Left cardiac atrium (tissue), 4 donors: ENCODE measurements at regions of chr7 and their contacts with region 1.

Region 1: GRCh38 chr7:95690367-95690947 is 81.9 kb upstream of the DYNC1I1 start:
- DNase-seq: no peak
- ATAC-seq: peak; percentile 59 to 62

Region 2: DNA sequence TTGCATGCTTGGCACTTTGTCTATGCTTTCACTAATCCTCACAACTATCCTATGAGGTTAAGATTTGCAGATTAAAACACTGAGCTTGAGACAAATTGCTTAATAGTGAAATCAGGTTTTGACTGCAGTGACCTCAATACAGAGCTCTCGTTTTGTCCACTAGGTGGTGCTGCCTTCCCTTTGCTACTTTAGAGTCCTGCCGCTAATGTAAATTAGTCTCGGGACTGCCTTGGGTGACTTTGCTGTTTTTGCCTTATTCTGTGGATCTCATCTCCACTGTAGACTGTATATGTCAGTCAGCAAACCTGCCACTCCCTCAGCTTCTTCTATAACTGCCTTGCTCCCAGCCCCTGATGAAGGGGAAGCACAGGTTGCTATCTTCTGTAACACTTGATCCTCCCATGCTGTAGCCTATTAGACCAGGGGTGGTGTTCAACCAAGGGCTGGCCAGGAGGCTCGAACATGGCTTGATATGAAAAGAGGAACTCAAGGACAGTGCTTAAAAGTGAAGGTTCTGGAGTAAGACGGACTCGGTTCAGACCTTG is 178.7 kb before region 1 on chr7:
- intact Hi-C with region 1: loop called in 1 of 2 experiments (anchors 5 kb)
- DNase-seq: peak; percentile 62
- ATAC-seq: peak; percentile 88 to 91

Region 3: DNA sequence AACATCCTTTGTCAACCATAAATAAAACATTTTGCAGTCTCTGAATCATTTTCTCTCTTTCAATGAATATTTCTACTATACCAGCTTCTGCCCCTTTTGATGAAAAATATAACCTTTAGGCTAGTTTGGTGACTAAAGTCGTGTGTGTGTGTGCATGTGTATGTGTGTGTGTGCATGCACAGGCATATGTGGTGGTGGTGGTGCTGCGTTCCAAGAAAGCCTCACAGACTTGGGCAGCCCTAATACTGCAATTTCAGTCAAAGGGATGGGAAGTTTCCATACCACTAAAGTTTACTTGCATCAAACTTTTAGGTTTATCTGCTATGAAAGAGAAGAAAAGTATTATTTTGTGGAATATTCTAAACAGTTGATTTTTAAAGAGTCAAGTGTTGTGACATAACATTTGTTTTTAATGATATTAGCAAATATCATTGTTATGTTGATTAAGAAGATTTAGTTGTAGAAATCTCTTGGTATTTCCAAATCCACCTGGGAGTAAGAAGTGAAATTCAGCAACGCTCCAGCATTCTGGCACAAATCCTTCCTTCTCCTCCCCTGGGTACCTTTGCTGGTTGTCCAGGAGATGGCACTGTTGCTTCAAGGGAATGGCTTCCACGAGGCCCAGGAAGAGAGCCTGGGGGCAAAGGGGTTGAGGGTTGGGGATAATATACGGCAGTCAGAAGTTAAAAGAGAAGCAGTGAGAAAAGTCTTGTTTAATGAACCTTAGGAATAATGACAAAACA is 163.3 kb before region 1 on chr7:
- intact Hi-C with region 1: loop called (anchors 1 to 5 kb)
- DNase-seq: peak; percentile 53
- ATAC-seq: peak; percentile 90 to 93

Region 4: GRCh38 chr7:95963446-95963990 is 273.1 kb after region 1 on chr7:
- intact Hi-C with region 1: no loop called
- DNase-seq: no peak
- ATAC-seq: peak in 1 of 2 donors; percentile 47